ENCODE measurements at regions of chr15 and their contacts with region 1.

Region 1: GRCh38 chr15:48975472-48976419 is 12.0 kb upstream of the SHC4 start:
- DNase-seq: peak; percentile 73
- ATAC-seq: peak; percentile 98
- H3K4me3 Mint-ChIP-seq: peak overlapping the region; percentile 30
- H3K27ac Mint-ChIP-seq: no peak overlapping the region
- H3K4me1 Mint-ChIP-seq: peaks cover 1% of the 10 kb centered on the region
- H3K27me3 Mint-ChIP-seq: peaks cover 18% of the 10 kb centered on the region
- CTCF ChIP-seq: peak; percentile 73

Region 2: GRCh38 chr15:48963524-48964113 is 12.1 kb before region 1 on chr15 and contains the start of gene SHC4:
- CTCF ChIA-PET with region 1: interaction called, 14 read pairs
- POLR2A ChIA-PET with region 1: no interaction called
- intact Hi-C with region 1: no loop called
- DNase-seq: no peak
- ATAC-seq: peak; percentile 28
- H3K4me3 Mint-ChIP-seq: peak within 1 kb of the TSS; percentile 79
- H3K27ac Mint-ChIP-seq: no peak within 1 kb of the TSS
- H3K4me1 Mint-ChIP-seq: peaks cover 22% of the 10 kb centered on the region
- H3K27me3 Mint-ChIP-seq: peaks cover 42% of the 10 kb centered on the region
- CTCF ChIP-seq: no peak
- total RNA-seq, gene SHC4: 0.24 TPM in 1 of 2 replicates, not detected in the other

Region 3: DNA sequence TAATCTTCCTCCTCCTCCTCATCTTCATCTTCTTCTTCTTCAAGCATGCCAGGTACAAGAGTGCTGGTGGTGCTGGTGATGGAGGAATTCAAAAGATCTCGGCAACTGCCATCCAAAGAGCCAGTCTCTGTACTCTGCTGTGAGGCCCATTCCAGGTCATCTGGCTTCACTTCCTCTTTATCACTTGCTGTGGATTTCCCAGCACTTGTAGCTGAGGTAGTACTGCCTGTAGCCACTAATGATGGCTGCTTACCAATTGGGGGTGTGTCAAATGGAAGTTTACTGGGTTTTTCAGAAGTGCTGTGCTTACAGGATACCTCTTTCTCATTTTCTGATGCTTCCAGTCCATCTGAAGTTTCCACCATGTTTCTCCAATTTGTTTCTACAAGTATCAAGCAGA is 16.8 kb after region 1 on chr15:
- CTCF ChIA-PET with region 1: interaction called, 11 read pairs
- POLR2A ChIA-PET with region 1: no interaction called
- intact Hi-C with region 1: no loop called
- DNase-seq: no peak
- ATAC-seq: peak; percentile 74
- H3K4me3 Mint-ChIP-seq: no peak overlapping the region
- H3K27ac Mint-ChIP-seq: peak overlapping the region; percentile 5
- H3K4me1 Mint-ChIP-seq: peaks cover 5% of the 10 kb centered on the region
- H3K27me3 Mint-ChIP-seq: no peaks in the 10 kb centered on the region
- CTCF ChIP-seq: no peak

Region 4: DNA sequence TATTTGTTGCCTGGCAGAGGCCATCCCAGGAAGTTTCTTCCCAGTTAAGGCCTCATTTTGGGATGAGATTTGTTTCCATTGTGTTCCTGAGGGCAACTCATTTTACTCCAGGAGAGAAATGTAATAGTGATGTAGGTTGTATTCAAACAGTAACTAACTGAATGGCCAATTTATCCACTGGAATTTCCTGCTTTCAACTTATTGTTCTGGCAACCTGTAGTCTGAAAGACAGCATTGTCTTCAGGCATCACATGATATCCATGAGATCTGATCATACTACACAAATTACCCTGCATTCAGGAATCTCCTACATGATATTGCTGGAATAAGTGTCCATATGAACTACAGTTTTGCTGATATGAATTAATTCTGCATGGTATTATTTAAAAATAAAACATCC is 367.8 kb after region 1 on chr15:
- CTCF ChIA-PET with region 1: no interaction called
- POLR2A ChIA-PET with region 1: no interaction called
- intact Hi-C with region 1: no loop called
- DNase-seq: no peak
- ATAC-seq: no peak
- H3K4me3 Mint-ChIP-seq: no peak overlapping the region
- H3K27ac Mint-ChIP-seq: no peak overlapping the region
- H3K4me1 Mint-ChIP-seq: no peaks in the 10 kb centered on the region
- H3K27me3 Mint-ChIP-seq: no peaks in the 10 kb centered on the region
- CTCF ChIP-seq: no peak

Measured in activated B cell treated with CpG ODN at 0.5 μM for 24 hours (primary cell).